Sigmoid colon (tissue), 7 donors: ENCODE measurements at regions of chr7 and their contacts with region 1.

Region 1: DNA sequence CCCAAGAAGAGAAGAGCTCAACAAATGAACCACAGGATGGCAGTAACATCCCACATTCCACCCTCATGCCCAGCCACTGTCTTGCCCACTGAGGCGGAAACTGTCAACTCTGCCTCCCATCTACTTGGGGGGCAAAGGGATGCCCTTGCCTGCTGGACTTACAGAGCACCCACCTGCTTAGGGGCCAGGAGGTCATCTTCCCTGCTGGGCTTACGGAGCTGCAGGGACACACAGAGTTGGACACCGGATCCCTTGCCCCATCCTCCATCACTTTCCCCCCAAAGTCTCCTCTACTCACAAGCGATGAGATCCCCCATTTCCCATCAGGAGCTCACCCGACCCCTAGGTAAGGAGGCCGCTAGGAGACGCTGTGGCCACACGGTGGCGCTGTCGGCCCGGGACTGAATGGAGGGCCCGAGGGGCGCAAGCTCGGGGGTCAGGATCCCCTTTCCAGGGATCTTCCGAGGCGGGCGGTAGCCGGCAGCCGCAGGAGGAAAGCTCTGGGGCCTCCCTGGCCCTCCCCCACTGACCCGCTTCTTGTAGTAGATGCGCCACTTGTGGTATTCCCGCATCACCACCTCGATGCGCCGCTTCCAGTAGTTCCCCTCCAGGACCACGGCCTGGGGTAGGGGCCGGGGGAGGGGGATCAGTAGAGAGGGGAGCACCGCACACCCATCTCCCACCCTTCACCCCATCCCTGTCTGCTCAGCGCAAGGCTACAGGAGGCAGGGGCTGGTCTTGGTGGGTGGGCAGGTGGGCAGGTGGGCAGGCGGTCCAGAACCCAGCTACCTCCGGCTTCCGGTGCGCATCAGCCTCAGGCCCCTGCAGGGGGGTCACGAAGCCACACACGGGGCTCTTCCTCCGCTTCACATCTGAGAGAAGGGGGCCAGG is 17.3 kb downstream of the MLXIPL start:
- DNase-seq: no peak
- H3K4me3 ChIP-seq: peak overlapping the region in 2 of 4 donors; percentile 11 to 14
- H3K27ac ChIP-seq: no peak overlapping the region
- H3K4me1 ChIP-seq: peaks cover 0 to 6% (median 3%) of the 10 kb centered on the region in 4 donors
- H3K27me3 ChIP-seq: peaks cover 0 to 22% (median 8%) of the 10 kb centered on the region in 3 donors
- CTCF ChIP-seq: peak; percentile 81 to 95 (median 92)
- EP300 ChIP-seq: no peak
- POLR2A ChIP-seq: no peak

Region 2: DNA sequence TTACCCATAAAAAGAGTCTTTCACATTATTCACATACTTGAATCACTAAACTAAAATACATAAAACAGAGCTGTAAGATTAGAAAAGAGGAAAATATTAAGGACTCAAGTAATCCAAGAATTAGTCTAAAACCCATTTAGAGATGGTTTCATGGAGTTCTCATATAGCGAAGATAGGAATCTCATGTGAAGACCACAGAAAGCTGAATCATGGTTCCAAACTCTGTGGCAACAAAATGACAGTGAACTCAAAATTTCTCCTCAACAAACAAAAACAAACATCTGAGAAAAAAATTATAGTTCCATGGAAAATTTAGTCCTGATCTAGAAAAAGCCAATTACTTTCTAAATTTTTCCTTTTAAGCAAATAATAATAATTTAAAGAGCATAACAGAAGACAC is 119.6 kb before region 1 on chr7:
- intact Hi-C with region 1: no loop called
- DNase-seq: no peak
- H3K4me3 ChIP-seq: no peak overlapping the region
- H3K27ac ChIP-seq: no peak overlapping the region
- H3K4me1 ChIP-seq: peaks cover 0 to 3% (median 0%) of the 10 kb centered on the region in 4 donors
- H3K27me3 ChIP-seq: no peaks in the 10 kb centered on the region
- CTCF ChIP-seq: no peak
- EP300 ChIP-seq: no peak
- POLR2A ChIP-seq: no peak

Region 3: DNA sequence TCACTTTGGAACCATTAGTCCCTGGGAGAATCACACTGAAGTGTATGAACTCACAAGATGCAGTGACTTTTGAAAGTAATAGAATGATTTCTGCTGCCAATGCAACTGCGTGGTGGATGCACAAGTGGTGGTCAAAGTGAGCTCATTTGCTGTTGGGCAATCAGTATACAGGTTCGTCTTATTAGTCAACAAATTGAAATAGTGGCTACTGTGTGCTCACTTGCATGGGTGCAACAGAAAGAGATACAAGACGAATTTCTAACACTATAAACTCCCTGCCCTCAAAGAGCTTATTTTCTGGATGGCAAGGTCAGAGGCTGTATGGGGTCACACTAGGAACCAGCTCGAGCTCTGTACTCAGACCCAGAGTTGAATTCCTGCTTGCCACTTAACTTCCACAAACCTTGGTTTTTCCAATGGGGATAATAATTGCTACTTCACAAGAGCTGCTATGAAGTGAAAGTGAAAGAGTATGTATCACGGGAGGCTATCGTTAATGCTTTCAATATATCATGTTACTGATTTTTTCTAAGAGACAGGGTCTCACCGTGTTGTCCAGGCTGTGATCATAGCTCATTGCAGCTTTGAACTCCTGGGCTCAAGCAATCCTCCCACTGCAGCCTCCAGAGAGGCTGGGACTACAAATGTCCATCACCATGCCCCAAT is 41.2 kb before region 1 on chr7:
- intact Hi-C with region 1: no loop called
- DNase-seq: peak; percentile 21
- H3K4me3 ChIP-seq: peak overlapping the region in 2 of 4 donors; percentile 23
- H3K27ac ChIP-seq: no peak overlapping the region
- H3K4me1 ChIP-seq: peaks cover 0 to 7% (median 3%) of the 10 kb centered on the region in 4 donors
- H3K27me3 ChIP-seq: no peaks in the 10 kb centered on the region
- CTCF ChIP-seq: no peak
- EP300 ChIP-seq: no peak
- POLR2A ChIP-seq: no peak

Region 4: GRCh38 chr7:73667344-73668102 is 60.5 kb after region 1 on chr7 and contains the start of gene VPS37D:
- intact Hi-C with region 1: loop called (anchors 1 kb)
- DNase-seq: peak; percentile 94
- H3K4me3 ChIP-seq: peak within 1 kb of the TSS; percentile 49 to 80 (median 76)
- H3K27ac ChIP-seq: peak within 1 kb of the TSS in 3 of 4 donors; percentile 25 to 66 (median 41)
- H3K4me1 ChIP-seq: peaks cover 0 to 21% (median 20%) of the 10 kb centered on the region in 4 donors
- H3K27me3 ChIP-seq: no peaks in the 10 kb centered on the region
- CTCF ChIP-seq: peak in 1 of 4 experiments; percentile 80
- EP300 ChIP-seq: no peak
- POLR2A ChIP-seq: no peak
- total RNA-seq, gene VPS37D: 1.6 to 8.7 (median 4.4) TPM

Region 5: DNA sequence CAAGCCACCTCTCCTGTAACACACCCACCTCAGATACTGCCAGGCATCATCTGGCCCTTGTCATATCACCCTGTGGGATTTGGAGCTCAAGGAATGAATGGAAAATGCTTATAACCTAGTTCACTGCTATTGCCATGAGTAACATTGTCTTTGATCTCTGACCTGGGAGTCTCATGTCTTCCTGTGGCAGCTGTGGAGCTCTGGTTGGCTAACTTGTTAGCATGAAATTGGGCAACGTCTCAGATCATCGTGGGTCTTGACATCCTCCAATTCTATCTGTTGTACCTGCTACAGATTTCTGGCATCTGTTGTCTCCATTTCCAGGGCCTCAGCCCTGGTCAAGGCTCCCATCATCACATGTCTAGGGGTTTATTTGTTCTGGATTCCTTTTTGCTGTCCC is 251.8 kb after region 1 on chr7:
- intact Hi-C with region 1: loop called (anchors 5 kb)
- DNase-seq: no peak
- H3K4me3 ChIP-seq: no peak overlapping the region
- H3K27ac ChIP-seq: no peak overlapping the region
- H3K4me1 ChIP-seq: peaks cover 0 to 8% (median 5%) of the 10 kb centered on the region in 4 donors
- H3K27me3 ChIP-seq: no peaks in the 10 kb centered on the region
- CTCF ChIP-seq: no peak
- EP300 ChIP-seq: no peak
- POLR2A ChIP-seq: no peak